Endothelial cell of umbilical vein (primary cell): ENCODE measurements at regions of chr13 and their contacts with region 1.

Region 1: GRCh38 chr13:75876360-75877050 is 240.4 kb downstream of the LMO7 start:
- DNase-seq: peak; percentile 74
- H3K4me3 ChIP-seq: no peak overlapping the region
- H3K27ac ChIP-seq: no peak overlapping the region
- H3K4me1 ChIP-seq: no peaks in the 10 kb centered on the region
- H3K27me3 ChIP-seq: peaks cover 0 to 2% of the 10 kb centered on the region in 2 experiments
- CTCF ChIP-seq: peak; percentile 76 to 78
- POLR2A ChIP-seq: no peak

Region 2: DNA sequence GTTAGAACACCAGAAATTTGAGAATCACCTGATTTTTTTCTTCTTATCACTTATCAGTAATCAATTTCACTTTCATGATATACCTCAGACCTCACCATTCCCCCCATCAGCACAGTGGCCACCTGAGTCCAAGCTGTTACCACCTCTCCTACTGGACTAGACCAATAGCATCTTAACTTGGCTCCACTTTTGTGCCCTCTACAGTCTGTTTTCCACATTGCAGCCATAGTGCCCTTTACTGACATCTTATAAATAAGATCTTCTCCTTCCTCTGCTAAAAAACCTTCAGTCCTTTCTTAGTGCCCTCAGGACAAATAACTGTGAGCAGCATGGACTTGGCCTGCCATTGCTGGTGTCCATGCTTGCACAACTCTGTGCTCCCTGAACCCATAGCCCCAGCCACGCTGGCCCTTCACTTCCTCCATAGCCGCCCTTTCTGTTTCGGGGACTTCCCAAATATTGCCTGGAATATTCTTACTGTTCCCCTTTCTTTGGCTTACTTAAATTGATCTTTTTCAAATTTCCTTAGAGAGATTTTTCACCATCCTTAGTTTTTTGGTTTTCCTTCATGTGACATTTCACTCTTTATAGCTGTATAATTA is 140.4 kb after region 1 on chr13:
- CTCF ChIA-PET with region 1: interaction called, 8 read pairs
- POLR2A ChIA-PET with region 1: no interaction called
- dilution Hi-C with region 1: no loop called
- intact Hi-C with region 1: loop called (anchors 1 kb)
- DNase-seq: peak; percentile 52
- H3K4me3 ChIP-seq: no peak overlapping the region
- H3K27ac ChIP-seq: no peak overlapping the region
- H3K4me1 ChIP-seq: no peaks in the 10 kb centered on the region
- H3K27me3 ChIP-seq: peaks cover 0 to 2% of the 10 kb centered on the region in 2 experiments
- CTCF ChIP-seq: peak; percentile 44 to 53
- POLR2A ChIP-seq: no peak

Region 3: GRCh38 chr13:76091076-76091475 is 214.6 kb after region 1 on chr13:
- CTCF ChIA-PET with region 1: no interaction called
- POLR2A ChIA-PET with region 1: no interaction called
- dilution Hi-C with region 1: no loop called
- intact Hi-C with region 1: loop called (anchors 10 kb)
- DNase-seq: no peak
- H3K4me3 ChIP-seq: no peak overlapping the region
- H3K27ac ChIP-seq: no peak overlapping the region
- H3K4me1 ChIP-seq: no peaks in the 10 kb centered on the region
- H3K27me3 ChIP-seq: no peaks in the 10 kb centered on the region
- CTCF ChIP-seq: no peak
- POLR2A ChIP-seq: no peak

Region 4: GRCh38 chr13:76667551-76667950 is 791.0 kb after region 1 on chr13:
- CTCF ChIA-PET with region 1: interaction called, 15 read pairs
- POLR2A ChIA-PET with region 1: no interaction called
- dilution Hi-C with region 1: no loop called
- intact Hi-C with region 1: loop called (anchors 2 kb)
- DNase-seq: peak; percentile 89
- H3K4me3 ChIP-seq: no peak overlapping the region
- H3K27ac ChIP-seq: no peak overlapping the region
- H3K4me1 ChIP-seq: no peaks in the 10 kb centered on the region
- H3K27me3 ChIP-seq: no peaks in the 10 kb centered on the region
- CTCF ChIP-seq: peak; percentile 21 to 39
- POLR2A ChIP-seq: no peak

Region 5: DNA sequence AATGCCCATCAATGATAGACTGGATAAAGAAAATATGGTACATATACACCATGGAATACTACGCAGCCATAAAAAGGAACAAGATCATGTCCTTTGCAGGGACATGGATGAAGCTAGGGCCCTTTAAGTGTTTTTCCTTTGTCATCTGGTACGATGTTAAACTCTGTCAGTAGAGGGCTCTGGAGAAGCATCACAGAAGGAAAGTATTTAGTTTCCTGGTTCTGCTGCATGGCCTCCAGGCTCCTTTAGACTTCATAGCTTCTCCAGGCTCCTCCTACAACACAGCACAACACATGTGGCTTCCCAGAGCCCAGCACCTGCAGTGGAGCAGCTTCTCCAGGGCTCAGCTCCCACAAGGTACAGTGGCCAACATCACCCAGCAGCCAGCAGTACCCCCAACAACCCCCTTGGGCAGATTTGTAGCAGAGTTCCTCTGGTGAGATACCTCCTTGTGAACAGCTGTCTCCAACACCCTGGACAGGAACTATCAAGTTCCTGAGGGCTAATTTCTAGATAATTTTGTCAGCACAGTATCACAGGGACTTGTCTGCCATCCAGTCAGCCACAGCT is 946.3 kb after region 1 on chr13:
- CTCF ChIA-PET with region 1: no interaction called
- POLR2A ChIA-PET with region 1: no interaction called
- dilution Hi-C with region 1: no loop called
- intact Hi-C with region 1: loop called (anchors 1 kb)
- DNase-seq: peak; percentile 71
- H3K4me3 ChIP-seq: no peak overlapping the region
- H3K27ac ChIP-seq: no peak overlapping the region
- H3K4me1 ChIP-seq: no peaks in the 10 kb centered on the region
- H3K27me3 ChIP-seq: no peaks in the 10 kb centered on the region
- CTCF ChIP-seq: peak in 1 of 2 donors; percentile 8
- POLR2A ChIP-seq: no peak